Right ventricle myocardium superior (tissue), 1 donor: ENCODE measurements at regions of chr7 and their contacts with region 1.

Region 1: DNA sequence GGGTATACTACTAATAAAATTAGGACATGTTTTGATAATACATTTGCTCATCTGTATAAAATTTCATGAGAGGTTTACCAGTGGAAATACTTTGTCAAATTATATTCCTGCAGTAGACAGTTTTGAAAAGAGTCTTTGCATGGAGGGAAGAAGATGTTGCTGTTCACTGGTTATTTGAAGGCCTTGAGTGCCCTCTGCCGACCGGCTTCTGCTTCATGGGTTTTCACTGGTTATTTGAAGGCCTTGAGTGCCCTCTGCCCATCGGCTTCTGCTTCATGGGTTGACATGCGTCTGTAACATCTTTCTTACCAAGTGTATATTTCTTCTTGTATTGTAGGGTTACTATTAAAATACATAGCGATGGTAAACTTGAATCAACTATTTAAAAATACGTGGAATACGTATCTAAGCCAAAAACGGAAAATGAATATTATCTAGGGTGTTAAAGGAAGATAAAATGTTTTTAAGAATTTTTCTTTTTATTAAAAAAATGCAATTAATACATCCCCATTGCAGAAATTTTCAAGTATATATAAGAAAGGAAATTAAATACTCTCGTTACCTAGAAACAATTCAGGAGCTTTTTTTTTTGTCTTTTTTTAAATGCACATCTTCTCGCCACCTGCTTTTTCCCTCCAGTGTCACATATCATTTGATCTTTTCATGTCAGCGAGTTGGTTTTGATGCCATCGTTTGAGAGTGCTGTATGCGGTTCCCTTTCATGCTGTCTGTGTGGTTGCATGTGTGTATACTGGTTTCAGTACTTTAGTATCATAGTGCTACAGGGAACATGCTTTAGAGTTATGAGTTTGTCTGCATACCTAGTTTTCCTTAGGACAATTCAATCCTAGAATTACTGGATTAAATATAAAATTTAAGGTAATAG is 73.4 kb downstream of the SHH start:
- DNase-seq: peak; percentile 86
- ATAC-seq: peak; percentile 88

Region 2: GRCh38 chr7:155598810-155599210 is 140.1 kb before region 1 on chr7:
- intact Hi-C with region 1: loop called (anchors 2 kb)
- DNase-seq: peak; percentile 90
- ATAC-seq: peak; percentile 71

Region 3: GRCh38 chr7:155644178-155644970 is 94.5 kb before region 1 on chr7 and contains the start of gene RBM33:
- intact Hi-C with region 1: loop called (anchors 10 kb)
- DNase-seq: peak; percentile 89
- ATAC-seq: peak; percentile 98
- total RNA-seq, gene RBM33: 32.8 TPM

Region 4: DNA sequence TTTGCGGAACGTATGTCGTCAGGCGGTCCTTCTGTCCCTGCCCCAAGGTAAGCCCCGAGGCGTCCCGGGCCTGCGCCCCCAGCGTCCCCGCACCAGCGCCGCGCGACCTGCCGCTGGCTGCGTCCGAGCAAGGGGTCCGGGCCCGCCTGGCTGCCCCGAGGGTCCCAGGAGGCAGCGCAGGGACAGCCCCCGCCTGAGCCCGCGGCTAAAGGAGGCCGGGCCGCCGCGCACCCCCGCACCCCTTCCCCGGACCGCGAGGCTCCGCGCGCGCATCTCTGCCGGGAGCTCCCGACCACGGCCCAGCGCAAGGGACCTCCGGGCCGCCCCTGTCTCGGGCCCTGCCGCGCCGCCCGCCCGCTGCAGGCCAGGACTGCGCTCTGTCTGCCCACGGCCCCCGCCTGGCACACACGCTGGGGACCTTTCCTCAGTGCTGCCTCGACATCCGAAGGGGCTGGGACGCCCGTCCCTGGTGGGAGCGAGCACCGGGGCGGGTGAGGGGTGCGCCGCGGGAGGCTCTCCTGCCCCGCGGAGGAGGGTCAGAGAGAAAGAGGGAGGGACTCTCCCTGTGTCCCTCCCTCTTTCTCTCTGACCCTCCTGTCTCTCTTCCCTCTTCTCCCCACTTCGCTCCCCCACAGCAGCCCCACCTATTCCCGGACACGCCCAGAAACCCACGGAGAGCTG is 48.4 kb after region 1 on chr7:
- intact Hi-C with region 1: no loop called
- DNase-seq: no peak
- ATAC-seq: peak; percentile 42

Region 5: DNA sequence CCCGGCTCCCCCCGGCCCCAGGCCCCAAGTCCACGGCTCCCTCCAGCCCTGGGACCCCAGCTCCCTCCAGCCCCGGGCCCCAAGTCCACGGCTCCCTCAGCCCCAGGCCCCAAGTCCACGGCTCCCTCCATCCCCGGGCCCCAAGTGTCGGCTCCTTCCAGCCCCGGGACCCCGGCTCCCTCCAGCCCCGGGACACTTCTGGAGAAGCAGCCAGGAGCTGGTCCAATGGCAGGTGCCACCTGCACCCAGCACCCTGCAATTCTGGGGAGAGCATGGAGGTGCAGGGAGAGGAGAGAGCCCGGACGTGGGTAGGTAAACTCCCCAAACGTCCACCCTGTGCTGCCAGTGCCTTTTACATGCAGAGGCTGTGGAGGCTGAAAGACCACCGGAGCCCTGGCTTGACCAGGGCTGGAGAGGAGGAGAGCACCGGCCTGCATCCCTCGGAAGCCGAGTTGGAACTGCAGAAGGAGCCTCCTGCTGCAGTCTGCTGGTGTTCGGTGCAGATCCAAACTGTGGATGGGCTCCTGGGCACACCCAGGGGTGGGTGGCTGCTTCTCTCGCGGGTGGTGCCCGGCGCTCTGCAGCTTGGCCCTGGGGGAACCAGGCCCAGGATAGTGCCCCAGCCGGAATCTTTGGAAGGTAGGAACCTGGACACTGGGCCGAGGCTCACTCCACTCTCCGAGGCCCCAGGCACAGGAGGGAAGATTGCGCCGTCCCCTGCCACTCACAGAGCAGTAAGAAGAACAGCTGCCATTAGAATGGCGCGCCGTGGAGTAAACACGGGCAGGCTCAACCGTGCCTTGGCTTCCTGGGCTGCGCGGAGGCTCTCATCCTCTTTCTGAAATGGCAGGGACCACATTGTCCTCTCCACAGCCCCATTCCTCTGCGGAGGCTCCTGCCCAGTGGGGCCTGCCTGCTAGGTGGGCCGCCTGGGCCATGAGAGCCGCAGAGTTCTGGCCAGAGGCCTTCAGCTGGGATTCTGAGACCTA is 58.7 kb after region 1 on chr7:
- intact Hi-C with region 1: no loop called
- DNase-seq: no peak
- ATAC-seq: peak; percentile 20

Region 6: GRCh38 chr7:156209084-156209483 is 470.2 kb after region 1 on chr7:
- intact Hi-C with region 1: no loop called
- DNase-seq: no peak
- ATAC-seq: no peak